Stomach (tissue), 19 donors: ENCODE measurements at regions of chr9 and their contacts with region 1.

Region 1: GRCh38 chr9:114271641-114272081 is 51.2 kb upstream of the ORM1 start:
- DNase-seq: peak in 1 of 2 donors; percentile 67
- H3K4me3 ChIP-seq: no peak overlapping the region
- H3K27ac ChIP-seq: no peak overlapping the region
- H3K4me1 ChIP-seq: no peaks in the 10 kb centered on the region
- H3K27me3 ChIP-seq: no peaks in the 10 kb centered on the region
- CTCF ChIP-seq: peak in 5 of 7 experiments; percentile 26 to 66 (median 35)
- EP300 ChIP-seq: no peak
- POLR2A ChIP-seq: no peak

Region 2: GRCh38 chr9:114163517-114163951 is 108.1 kb before region 1 on chr9:
- intact Hi-C with region 1: loop called (anchors 10 kb)
- DNase-seq: peak; percentile 46 to 85
- H3K4me3 ChIP-seq: peak overlapping the region; percentile 5 to 22 (median 16)
- H3K27ac ChIP-seq: peak overlapping the region in 3 of 5 donors; percentile 1 to 66 (median 50)
- H3K4me1 ChIP-seq: peaks cover 5 to 22% (median 12%) of the 10 kb centered on the region in 4 donors
- H3K27me3 ChIP-seq: no peaks in the 10 kb centered on the region
- CTCF ChIP-seq: no peak
- EP300 ChIP-seq: no peak
- POLR2A ChIP-seq: no peak

Region 3: GRCh38 chr9:114799441-114799840 is 527.8 kb after region 1 on chr9:
- intact Hi-C with region 1: no loop called
- DNase-seq: no peak
- H3K4me3 ChIP-seq: no peak overlapping the region
- H3K27ac ChIP-seq: no peak overlapping the region
- H3K4me1 ChIP-seq: peaks cover 7 to 19% (median 16%) of the 10 kb centered on the region in 4 donors
- H3K27me3 ChIP-seq: no peaks in the 10 kb centered on the region
- CTCF ChIP-seq: no peak
- EP300 ChIP-seq: no peak
- POLR2A ChIP-seq: no peak